ENCODE measurements at regions of chr10 and their contacts with region 1.

Region 1: DNA sequence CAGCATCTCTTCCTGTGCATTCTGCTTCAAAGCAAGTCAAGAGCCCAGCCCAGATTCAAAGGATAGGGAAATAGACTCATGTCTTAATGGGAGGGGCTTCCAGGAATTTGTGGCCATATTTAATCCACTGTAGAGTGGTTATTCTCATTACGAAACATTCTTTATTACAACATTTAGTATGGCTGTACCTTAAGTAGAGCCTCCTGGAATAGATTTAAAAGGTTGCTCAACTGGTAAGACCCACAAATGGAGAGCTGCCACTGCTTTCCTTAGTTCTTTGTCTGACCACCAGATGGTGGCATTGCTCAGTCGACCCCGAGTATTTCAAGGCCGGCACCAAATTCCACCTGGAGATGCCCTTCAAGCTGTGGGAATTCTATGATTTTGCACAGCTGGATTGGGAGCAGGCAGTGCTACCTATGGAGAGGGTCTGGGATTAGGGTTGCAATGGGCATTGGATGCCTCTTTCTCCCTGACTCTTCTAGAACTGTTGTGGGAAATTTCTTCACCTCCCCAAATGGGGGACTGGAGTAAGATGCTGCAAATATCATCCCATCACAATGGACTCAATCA is 102.2 kb downstream of the RBM20 start:
- DNase-seq: peak; percentile 22 to 75 (median 46)
- ATAC-seq: peak; percentile 37
- H3K4me3 ChIP-seq: no peak overlapping the region
- H3K4me3 Mint-ChIP-seq: no peak overlapping the region
- H3K27ac ChIP-seq: no peak overlapping the region
- H3K27ac Mint-ChIP-seq: no peak overlapping the region
- H3K4me1 ChIP-seq: peaks cover 22% of the 10 kb centered on the region
- H3K4me1 Mint-ChIP-seq: peaks cover 52% of the 10 kb centered on the region
- H3K27me3 ChIP-seq: no peaks in the 10 kb centered on the region
- H3K27me3 Mint-ChIP-seq: no peaks in the 10 kb centered on the region
- CTCF ChIP-seq: peak; percentile 89

Region 2: DNA sequence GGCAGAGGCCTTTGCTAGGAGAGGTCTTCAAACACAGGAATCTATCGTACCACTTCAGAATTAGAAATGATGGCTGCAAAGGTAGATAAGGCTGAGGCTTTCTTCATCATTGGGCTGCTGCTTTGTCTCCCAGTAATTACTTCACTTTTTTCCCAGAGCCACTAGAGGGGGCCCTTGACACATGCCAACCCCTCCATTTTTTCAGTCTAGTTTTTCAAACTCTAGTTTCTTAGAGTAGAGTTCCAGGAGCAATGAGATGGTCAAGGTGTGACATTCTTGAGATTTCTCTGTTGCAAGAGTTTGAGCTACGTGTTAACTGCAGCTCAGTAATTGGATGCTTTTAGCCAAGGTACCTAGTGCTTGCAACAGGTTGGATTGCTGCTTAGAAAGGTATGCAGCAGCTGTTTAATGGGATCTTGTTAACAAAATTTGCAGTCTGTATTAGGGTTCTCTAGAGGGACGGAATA is 136.0 kb before region 1 on chr10:
- CTCF ChIA-PET with region 1: interaction called, 5 read pairs
- POLR2A ChIA-PET with region 1: no interaction called
- intact Hi-C with region 1: loop called (anchors 1 to 5 kb)
- DNase-seq: peak in 8 of 9 experiments; percentile 19 to 73 (median 56)
- ATAC-seq: peak; percentile 77
- H3K4me3 ChIP-seq: no peak overlapping the region
- H3K4me3 Mint-ChIP-seq: no peak overlapping the region
- H3K27ac ChIP-seq: no peak overlapping the region
- H3K27ac Mint-ChIP-seq: no peak overlapping the region
- H3K4me1 ChIP-seq: no peaks in the 10 kb centered on the region
- H3K4me1 Mint-ChIP-seq: peaks cover 10% of the 10 kb centered on the region
- H3K27me3 ChIP-seq: no peaks in the 10 kb centered on the region
- H3K27me3 Mint-ChIP-seq: no peaks in the 10 kb centered on the region
- CTCF ChIP-seq: peak; percentile 84

Region 3: DNA sequence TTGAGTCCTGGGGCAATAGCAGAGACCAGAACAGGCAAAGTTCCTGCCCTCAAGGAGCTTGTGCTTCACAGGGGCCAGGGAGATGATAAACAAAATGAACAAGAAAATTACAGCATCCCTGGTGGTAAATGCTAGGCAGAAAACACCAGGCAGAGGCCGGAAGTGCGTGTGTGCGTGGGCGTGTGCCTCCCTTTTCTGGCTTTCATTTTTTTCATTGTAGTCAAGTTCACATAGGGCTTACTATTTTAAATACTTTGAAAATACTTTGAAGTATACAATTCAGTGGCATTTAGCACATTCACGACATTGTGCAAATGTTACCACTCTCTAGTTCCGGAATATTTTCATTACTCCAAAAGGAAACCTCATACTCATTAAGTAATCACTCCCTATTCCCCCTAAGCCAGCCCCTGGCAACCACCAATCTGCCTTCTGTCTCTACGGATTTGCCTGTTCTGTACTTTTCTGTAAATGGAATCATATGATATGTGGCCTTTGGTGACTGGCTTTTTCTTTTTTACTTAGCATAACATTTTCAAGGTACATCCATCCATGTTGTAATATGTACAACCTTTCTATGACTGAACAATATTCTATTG is 37.3 kb after region 1 on chr10:
- CTCF ChIA-PET with region 1: interaction called, 3 read pairs
- POLR2A ChIA-PET with region 1: no interaction called
- intact Hi-C with region 1: loop called in 1 of 2 experiments (anchors 5 kb)
- DNase-seq: peak; percentile 42 to 91 (median 73)
- ATAC-seq: peak; percentile 87
- H3K4me3 ChIP-seq: no peak overlapping the region
- H3K4me3 Mint-ChIP-seq: peak overlapping the region; percentile 40
- H3K27ac ChIP-seq: peak overlapping the region; percentile 40 to 67
- H3K27ac Mint-ChIP-seq: peak overlapping the region; percentile 94
- H3K4me1 ChIP-seq: peaks cover 21% of the 10 kb centered on the region
- H3K4me1 Mint-ChIP-seq: peaks cover 46% of the 10 kb centered on the region
- H3K27me3 ChIP-seq: no peaks in the 10 kb centered on the region
- H3K27me3 Mint-ChIP-seq: no peaks in the 10 kb centered on the region
- CTCF ChIP-seq: no peak

Region 4: GRCh38 chr10:110871298-110872084 is 125.2 kb after region 1 on chr10 and contains the start of gene PDCD4:
- CTCF ChIA-PET with region 1: interaction called, 4 read pairs
- POLR2A ChIA-PET with region 1: no interaction called
- intact Hi-C with region 1: loop called (anchors 1 to 2 kb)
- DNase-seq: peak; percentile 87 to 96 (median 94)
- ATAC-seq: peak; percentile 58
- H3K4me3 ChIP-seq: peak within 1 kb of the TSS; percentile 55 to 85
- H3K4me3 Mint-ChIP-seq: peak within 1 kb of the TSS; percentile 89
- H3K27ac ChIP-seq: peak within 1 kb of the TSS; percentile 78 to 97
- H3K27ac Mint-ChIP-seq: peak within 1 kb of the TSS; percentile 98
- H3K4me1 ChIP-seq: peaks cover 71% of the 10 kb centered on the region
- H3K4me1 Mint-ChIP-seq: peaks cover 67% of the 10 kb centered on the region
- H3K27me3 ChIP-seq: no peaks in the 10 kb centered on the region
- H3K27me3 Mint-ChIP-seq: no peaks in the 10 kb centered on the region
- CTCF ChIP-seq: no peak
- total RNA-seq, gene PDCD4: 672 to 688 TPM

Region 5: DNA sequence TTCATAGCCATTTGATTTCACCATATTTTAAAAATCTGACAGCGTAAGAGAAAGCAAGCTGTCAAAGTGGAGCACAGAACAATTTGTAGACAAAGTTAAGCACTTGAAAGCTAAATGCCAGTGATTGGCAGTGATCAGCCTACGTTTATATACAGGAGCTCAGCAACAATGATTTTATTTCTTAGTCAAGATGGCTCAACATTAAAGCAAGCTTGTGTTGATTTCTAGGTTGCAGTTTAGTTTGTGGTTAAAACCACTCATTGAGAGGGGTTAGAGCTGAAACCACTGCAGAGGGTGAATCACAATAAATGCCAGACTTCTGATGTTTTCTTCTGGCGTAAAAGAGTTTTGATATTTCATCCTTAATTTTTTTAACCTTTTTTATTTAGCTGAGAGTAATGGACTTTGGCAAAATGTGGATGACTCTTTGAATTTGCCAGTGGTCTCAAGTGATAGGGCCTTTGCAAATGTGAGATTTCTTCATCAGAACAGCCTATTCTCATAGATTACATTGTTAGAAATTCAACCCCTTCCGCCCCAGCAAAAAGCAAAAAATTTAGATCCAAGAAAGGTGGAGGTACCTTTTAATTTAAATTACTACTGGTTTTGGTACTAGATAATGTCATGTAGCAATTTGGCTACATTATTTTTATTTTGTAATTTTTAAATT is 246.8 kb after region 1 on chr10:
- CTCF ChIA-PET with region 1: no interaction called
- POLR2A ChIA-PET with region 1: no interaction called
- intact Hi-C with region 1: loop called in 1 of 2 experiments (anchors 10 kb)
- DNase-seq: peak in 4 of 9 experiments; percentile 19 to 75 (median 45)
- ATAC-seq: peak; percentile 97
- H3K4me3 ChIP-seq: peak overlapping the region; percentile 5 to 14
- H3K4me3 Mint-ChIP-seq: peak overlapping the region; percentile 70
- H3K27ac ChIP-seq: peak overlapping the region in 1 of 2 experiments; percentile 20
- H3K27ac Mint-ChIP-seq: peak overlapping the region; percentile 72
- H3K4me1 ChIP-seq: peaks cover 29% of the 10 kb centered on the region
- H3K4me1 Mint-ChIP-seq: peaks cover 45% of the 10 kb centered on the region
- H3K27me3 ChIP-seq: no peaks in the 10 kb centered on the region
- H3K27me3 Mint-ChIP-seq: no peaks in the 10 kb centered on the region
- CTCF ChIP-seq: no peak

Region 6: GRCh38 chr10:111093741-111094380 is 347.5 kb after region 1 on chr10:
- CTCF ChIA-PET with region 1: interaction called, 3 read pairs
- POLR2A ChIA-PET with region 1: no interaction called
- intact Hi-C with region 1: loop called in 1 of 2 experiments (anchors 10 kb)
- DNase-seq: no peak
- ATAC-seq: no peak
- H3K4me3 ChIP-seq: no peak overlapping the region
- H3K4me3 Mint-ChIP-seq: no peak overlapping the region
- H3K27ac ChIP-seq: no peak overlapping the region
- H3K27ac Mint-ChIP-seq: no peak overlapping the region
- H3K4me1 ChIP-seq: no peaks in the 10 kb centered on the region
- H3K4me1 Mint-ChIP-seq: no peaks in the 10 kb centered on the region
- H3K27me3 ChIP-seq: no peaks in the 10 kb centered on the region
- H3K27me3 Mint-ChIP-seq: peaks cover 27% of the 10 kb centered on the region
- CTCF ChIP-seq: no peak

Region 7: DNA sequence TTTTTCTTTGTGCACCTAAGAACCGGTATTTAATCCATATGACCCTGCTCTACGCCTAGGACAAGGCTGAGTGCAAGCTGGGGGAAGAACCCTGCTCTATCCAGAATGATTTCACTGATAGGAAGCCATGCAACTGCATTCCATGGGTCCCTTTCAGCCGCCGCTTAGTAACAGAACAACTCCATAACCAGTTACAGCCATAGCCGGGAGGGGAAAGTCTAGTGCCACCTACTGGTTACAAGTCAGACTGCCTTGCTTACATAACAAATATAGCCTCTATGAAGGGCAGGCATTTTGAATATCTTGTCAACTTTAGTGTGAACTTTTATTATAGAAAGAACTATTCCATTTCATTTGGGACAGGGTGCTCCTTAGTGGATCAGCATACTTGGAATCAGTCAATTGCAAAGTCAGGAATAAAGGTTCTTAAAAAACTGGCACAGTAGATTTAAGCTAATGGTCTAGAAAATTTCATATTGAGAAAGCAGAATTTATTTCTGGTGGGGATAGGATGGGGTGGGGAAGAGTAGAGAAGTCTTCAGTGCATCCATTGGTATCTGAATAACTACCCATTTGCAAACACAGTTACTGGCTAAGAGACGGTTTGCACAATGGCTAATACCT is 852.2 kb after region 1 on chr10:
- CTCF ChIA-PET with region 1: interaction called, 11 read pairs
- POLR2A ChIA-PET with region 1: no interaction called
- intact Hi-C with region 1: loop called in 1 of 2 experiments (anchors 5 kb)
- DNase-seq: peak in 8 of 9 experiments; percentile 3 to 63 (median 26)
- ATAC-seq: no peak
- H3K4me3 ChIP-seq: no peak overlapping the region
- H3K4me3 Mint-ChIP-seq: no peak overlapping the region
- H3K27ac ChIP-seq: no peak overlapping the region
- H3K27ac Mint-ChIP-seq: no peak overlapping the region
- H3K4me1 ChIP-seq: no peaks in the 10 kb centered on the region
- H3K4me1 Mint-ChIP-seq: no peaks in the 10 kb centered on the region
- H3K27me3 ChIP-seq: no peaks in the 10 kb centered on the region
- H3K27me3 Mint-ChIP-seq: peaks cover 4% of the 10 kb centered on the region
- CTCF ChIP-seq: peak; percentile 66